ENCODE measurements at regions of chr3 and their contacts with region 1.

Region 1: GRCh38 chr3:143090486-143090885 is 29.1 kb upstream of the CHST2 start:
- DNase-seq: peak; percentile 13 to 40
- ATAC-seq: peak in 4 of 8 donors; percentile 22 to 73 (median 44)
- H3K4me3 ChIP-seq: no peak overlapping the region
- H3K27ac ChIP-seq: no peak overlapping the region
- H3K4me1 ChIP-seq: no peaks in the 10 kb centered on the region
- H3K27me3 ChIP-seq: no peaks in the 10 kb centered on the region
- CTCF ChIP-seq: no peak

Region 2: GRCh38 chr3:143158014-143158988 is 67.8 kb after region 1 on chr3:
- intact Hi-C with region 1: loop called in 1 of 10 experiments (anchors 10 kb)
- DNase-seq: no peak
- ATAC-seq: peak in 3 of 8 donors; percentile 49 to 79 (median 53)
- H3K4me3 ChIP-seq: no peak overlapping the region
- H3K27ac ChIP-seq: no peak overlapping the region
- H3K4me1 ChIP-seq: peaks cover 0 to 15% (median 0%) of the 10 kb centered on the region in 9 donors
- H3K27me3 ChIP-seq: peaks cover 0 to 3% (median 0%) of the 10 kb centered on the region in 7 donors
- CTCF ChIP-seq: no peak

Region 3: GRCh38 chr3:143707848-143708247 is 617.4 kb after region 1 on chr3:
- intact Hi-C with region 1: no loop called
- DNase-seq: no peak
- ATAC-seq: no peak
- H3K4me3 ChIP-seq: no peak overlapping the region
- H3K27ac ChIP-seq: no peak overlapping the region
- H3K4me1 ChIP-seq: no peaks in the 10 kb centered on the region
- H3K27me3 ChIP-seq: no peaks in the 10 kb centered on the region
- CTCF ChIP-seq: no peak